ENCODE measurements at regions of chr19 and their contacts with region 1.

Region 1: GRCh38 chr19:1269065-1269477 is at the start of gene CIRBP:
- DNase-seq: peak; percentile 99
- H3K4me3 ChIP-seq: peak within 1 kb of the TSS; percentile 82
- H3K4me3 Mint-ChIP-seq: peak within 1 kb of the TSS; percentile 89
- H3K27ac Mint-ChIP-seq: peak within 1 kb of the TSS; percentile 94
- H3K4me1 ChIP-seq: peaks cover 39% of the 10 kb centered on the region
- H3K4me1 Mint-ChIP-seq: peaks cover 29% of the 10 kb centered on the region
- H3K27me3 ChIP-seq: no peaks in the 10 kb centered on the region
- H3K27me3 Mint-ChIP-seq: no peaks in the 10 kb centered on the region
- CTCF ChIP-seq: no peak
- total RNA-seq, gene CIRBP: 289 and 331 TPM in 2 replicates

Region 2: GRCh38 chr19:1064661-1065605 is 204.1 kb before region 1 on chr19:
- CTCF ChIA-PET with region 1: interaction called, 6 read pairs
- POLR2A ChIA-PET with region 1: interaction called, 11 read pairs
- intact Hi-C with region 1: no loop called
- DNase-seq: peak; percentile 81 to 89
- H3K4me3 ChIP-seq: peak overlapping the region; percentile 61
- H3K4me3 Mint-ChIP-seq: peak overlapping the region; percentile 84
- H3K27ac Mint-ChIP-seq: peak overlapping the region; percentile 77
- H3K4me1 ChIP-seq: peaks cover 15% of the 10 kb centered on the region
- H3K4me1 Mint-ChIP-seq: no peaks in the 10 kb centered on the region
- H3K27me3 ChIP-seq: no peaks in the 10 kb centered on the region
- H3K27me3 Mint-ChIP-seq: no peaks in the 10 kb centered on the region
- CTCF ChIP-seq: peak; percentile 81 to 84

Region 3: GRCh38 chr19:1113033-1113985 is 155.8 kb before region 1 on chr19:
- CTCF ChIA-PET with region 1: no interaction called
- POLR2A ChIA-PET with region 1: interaction called, 11 read pairs
- intact Hi-C with region 1: no loop called
- DNase-seq: peak; percentile 82
- H3K4me3 ChIP-seq: no peak overlapping the region
- H3K4me3 Mint-ChIP-seq: no peak overlapping the region
- H3K27ac Mint-ChIP-seq: no peak overlapping the region
- H3K4me1 ChIP-seq: peaks cover 5% of the 10 kb centered on the region; the same call in 1 of the 2 replicates
- H3K4me1 Mint-ChIP-seq: no peaks in the 10 kb centered on the region
- H3K27me3 ChIP-seq: no peaks in the 10 kb centered on the region
- H3K27me3 Mint-ChIP-seq: no peaks in the 10 kb centered on the region
- CTCF ChIP-seq: peak; percentile 56 to 64

Region 4: DNA sequence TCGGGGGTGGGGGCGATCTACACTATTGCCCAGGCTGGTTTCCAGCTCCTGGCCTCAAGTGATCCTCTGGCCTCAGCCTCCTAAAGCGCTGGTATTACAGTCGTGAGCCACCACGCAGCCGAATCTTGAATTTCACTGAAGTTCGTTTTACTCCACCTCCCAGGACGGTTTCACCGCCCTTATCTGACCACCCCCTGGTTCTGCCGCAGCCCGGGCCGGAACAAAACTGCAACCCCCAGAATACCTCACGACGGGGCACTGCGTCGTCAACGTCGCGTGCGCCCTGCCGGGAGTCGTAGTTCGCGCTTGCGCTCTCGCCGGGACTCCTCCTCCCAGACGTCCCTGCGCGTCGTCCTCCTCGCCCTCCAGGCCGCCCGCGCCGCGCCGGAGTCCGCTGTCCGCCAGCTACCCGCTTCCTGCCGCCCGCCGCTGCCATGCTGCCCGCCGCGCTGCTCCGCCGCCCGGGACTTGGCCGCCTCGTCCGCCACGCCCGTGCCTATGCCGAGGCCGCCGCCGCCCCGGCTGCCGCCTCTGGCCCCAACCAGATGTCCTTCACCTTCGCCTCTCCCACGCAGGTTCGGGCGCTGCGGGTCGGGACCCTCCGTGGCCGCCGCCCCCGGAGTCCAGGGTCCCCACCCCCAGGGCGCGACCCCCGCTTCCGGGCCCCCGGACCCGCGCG is 27.5 kb before region 1 on chr19 and contains the start of gene ATP5F1D:
- CTCF ChIA-PET with region 1: interaction called, 440 read pairs
- POLR2A ChIA-PET with region 1: interaction called, 110 read pairs
- intact Hi-C with region 1: loop called (anchors 1 kb)
- DNase-seq: peak; percentile 92
- H3K4me3 ChIP-seq: peak within 1 kb of the TSS; percentile 45
- H3K4me3 Mint-ChIP-seq: peak within 1 kb of the TSS; percentile 76
- H3K27ac Mint-ChIP-seq: peak within 1 kb of the TSS; percentile 81
- H3K4me1 ChIP-seq: peaks cover 43% of the 10 kb centered on the region
- H3K4me1 Mint-ChIP-seq: no peaks in the 10 kb centered on the region
- H3K27me3 ChIP-seq: no peaks in the 10 kb centered on the region
- H3K27me3 Mint-ChIP-seq: no peaks in the 10 kb centered on the region
- CTCF ChIP-seq: no peak
- total RNA-seq, gene ATP5F1D: 126 and 140 TPM in 2 replicates

Region 5: DNA sequence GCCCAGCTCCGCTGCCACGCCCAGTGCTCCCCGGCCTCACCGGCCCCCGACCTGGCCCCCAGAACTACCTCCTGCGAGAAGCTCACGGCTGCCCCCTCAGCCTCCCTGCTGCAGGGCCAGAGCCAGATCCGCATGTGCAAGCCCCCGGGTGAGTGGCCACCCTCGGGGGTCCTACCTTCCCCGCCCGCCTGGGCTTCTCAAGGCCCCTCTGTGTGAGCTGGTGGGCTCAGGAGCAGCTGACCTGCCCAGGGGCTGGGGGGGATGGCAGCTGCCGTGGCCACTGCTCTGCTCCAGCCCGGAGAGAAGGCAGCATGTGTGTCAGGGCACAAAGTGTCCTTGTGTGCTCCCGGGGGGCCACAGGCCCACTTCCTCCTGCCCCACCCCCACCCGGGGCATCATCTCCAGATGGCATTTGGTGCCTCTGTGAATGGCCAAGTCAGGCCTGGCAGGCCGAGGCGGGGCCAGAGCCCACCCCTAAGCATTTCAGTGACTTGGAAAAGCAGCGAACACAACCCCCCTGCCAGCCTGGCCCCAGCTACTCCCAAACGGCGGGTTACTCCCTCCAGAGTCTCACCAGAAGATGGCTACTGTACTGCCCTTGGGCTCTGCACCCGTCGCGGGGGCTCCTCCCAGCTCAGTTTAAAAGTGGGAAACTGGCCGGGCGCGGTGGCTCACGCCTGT is 13.4 kb before region 1 on chr19:
- CTCF ChIA-PET with region 1: interaction called, 37 read pairs
- POLR2A ChIA-PET with region 1: interaction called, 62 read pairs
- intact Hi-C with region 1: loop called (anchors 1 kb)
- DNase-seq: no peak
- H3K4me3 ChIP-seq: no peak overlapping the region
- H3K4me3 Mint-ChIP-seq: no peak overlapping the region
- H3K27ac Mint-ChIP-seq: no peak overlapping the region
- H3K4me1 ChIP-seq: peaks cover 55% of the 10 kb centered on the region
- H3K4me1 Mint-ChIP-seq: peaks cover 12% of the 10 kb centered on the region
- H3K27me3 ChIP-seq: no peaks in the 10 kb centered on the region
- H3K27me3 Mint-ChIP-seq: no peaks in the 10 kb centered on the region
- CTCF ChIP-seq: no peak

Region 6: DNA sequence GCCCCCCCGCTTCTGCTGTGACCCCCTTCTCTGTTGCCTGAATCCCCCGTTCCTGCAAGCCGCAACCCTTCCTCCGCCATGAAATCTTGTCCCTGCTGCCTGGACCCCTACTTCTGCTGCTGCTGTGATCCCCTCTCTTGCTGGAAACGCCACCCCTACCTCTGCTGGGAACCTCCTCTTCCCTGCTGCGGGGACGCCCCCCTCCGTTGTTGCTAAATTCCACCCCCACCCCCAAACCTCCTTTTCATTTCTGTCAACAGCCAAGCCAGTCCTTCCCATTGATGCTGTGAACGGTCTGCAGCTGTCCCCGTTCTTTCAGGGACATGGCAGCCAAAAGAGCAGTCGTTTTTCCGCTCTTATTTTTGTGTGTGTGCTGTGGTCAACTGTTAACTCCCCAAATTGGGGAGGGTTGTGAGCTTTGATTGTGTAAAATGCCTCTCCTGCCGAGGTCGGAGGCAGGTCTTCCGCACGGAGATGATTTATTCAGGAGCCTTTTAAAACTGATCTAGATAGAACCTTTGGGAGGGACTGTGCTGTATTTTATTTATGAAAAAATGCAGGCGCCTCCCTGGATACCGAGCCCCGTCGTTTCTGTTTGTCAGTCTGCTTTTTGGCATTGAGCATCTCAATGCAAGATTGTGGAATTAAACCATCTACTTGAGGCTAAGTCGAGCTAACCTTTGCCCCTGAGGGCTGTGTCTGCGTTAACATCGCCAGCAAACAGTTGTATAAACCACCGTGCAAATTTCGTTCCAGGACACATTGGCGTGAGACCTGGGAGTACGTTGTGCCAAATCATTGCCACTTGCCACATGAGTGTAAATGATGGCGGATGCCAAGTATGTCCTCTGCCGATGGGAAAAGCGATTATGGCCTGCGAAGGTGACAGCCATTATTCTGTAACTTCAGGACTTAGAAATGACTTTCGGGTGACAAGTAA is 86.8 kb after region 1 on chr19:
- CTCF ChIA-PET with region 1: interaction called, 7 read pairs
- POLR2A ChIA-PET with region 1: interaction called, 15 read pairs
- intact Hi-C with region 1: no loop called
- DNase-seq: no peak
- H3K4me3 ChIP-seq: peak overlapping the region; percentile 94
- H3K4me3 Mint-ChIP-seq: peak overlapping the region; percentile 77
- H3K27ac Mint-ChIP-seq: peak overlapping the region; percentile 77
- H3K4me1 ChIP-seq: no peaks in the 10 kb centered on the region
- H3K4me1 Mint-ChIP-seq: peaks cover 5% of the 10 kb centered on the region
- H3K27me3 ChIP-seq: no peaks in the 10 kb centered on the region
- H3K27me3 Mint-ChIP-seq: no peaks in the 10 kb centered on the region
- CTCF ChIP-seq: no peak